ENCODE measurements at regions of chr2 and their contacts with region 1.

Region 1: DNA sequence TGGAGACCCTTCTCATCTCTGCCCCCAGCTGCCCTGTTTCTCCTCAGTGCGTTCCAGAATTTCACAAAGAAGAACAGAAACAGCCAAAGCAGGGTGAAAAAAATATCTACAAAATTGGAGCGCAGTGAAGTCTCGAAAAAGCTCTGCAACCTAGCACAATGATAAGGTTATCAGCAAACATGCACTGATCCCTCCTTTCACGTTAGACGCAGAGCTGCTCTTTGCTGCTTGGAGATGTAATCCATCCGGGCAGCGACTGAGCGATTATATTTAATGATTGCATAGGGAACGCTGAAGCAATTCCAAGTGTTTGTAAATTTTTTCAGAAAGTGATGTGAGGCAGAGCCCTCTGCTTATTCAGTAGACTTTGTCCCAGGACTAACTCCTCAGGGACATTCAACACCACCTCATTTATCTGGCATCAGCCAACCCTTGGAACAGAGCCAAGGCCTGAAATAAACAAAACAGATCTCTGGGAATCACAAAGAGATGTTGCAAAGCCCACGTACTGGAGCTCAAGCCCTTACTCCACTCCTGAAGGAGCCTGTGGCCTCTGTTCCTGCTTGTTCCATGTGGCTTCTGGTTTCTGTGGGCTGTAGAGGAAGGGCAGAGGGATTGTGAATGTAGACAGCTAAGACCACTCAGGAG is 172.6 kb upstream of the BCL2L11 start:
- DNase-seq: peak; percentile 32 to 80
- ATAC-seq: peak; percentile 95 to 96
- H3K4me3 ChIP-seq: no peak overlapping the region
- H3K27ac ChIP-seq: peak overlapping the region; percentile 8 to 49 (median 42)
- H3K4me1 ChIP-seq: peaks cover 22 to 23% of the 10 kb centered on the region in 2 donors
- H3K27me3 ChIP-seq: no peaks in the 10 kb centered on the region
- CTCF ChIP-seq: no peak
- POLR2A ChIP-seq: no peak

Region 2: GRCh38 chr2:110204780-110205385 is 743.3 kb before region 1 on chr2 and contains the start of gene NPHP1:
- in situ Hi-C with region 1: no loop called
- intact Hi-C with region 1: no loop called
- DNase-seq: peak; percentile 77 to 91
- ATAC-seq: peak; percentile 80 to 84
- H3K4me3 ChIP-seq: peak within 1 kb of the TSS; percentile 65 to 79 (median 70)
- H3K27ac ChIP-seq: peak within 1 kb of the TSS; percentile 76 to 94 (median 86)
- H3K4me1 ChIP-seq: peaks cover 16 to 40% of the 10 kb centered on the region in 2 donors
- H3K27me3 ChIP-seq: no peaks in the 10 kb centered on the region
- CTCF ChIP-seq: peak in 1 of 5 experiments; percentile 45
- POLR2A ChIP-seq: peak; percentile 84 to 88
- total RNA-seq, gene NPHP1: 3.8 to 10.3 (median 4.6) TPM

Region 3: DNA sequence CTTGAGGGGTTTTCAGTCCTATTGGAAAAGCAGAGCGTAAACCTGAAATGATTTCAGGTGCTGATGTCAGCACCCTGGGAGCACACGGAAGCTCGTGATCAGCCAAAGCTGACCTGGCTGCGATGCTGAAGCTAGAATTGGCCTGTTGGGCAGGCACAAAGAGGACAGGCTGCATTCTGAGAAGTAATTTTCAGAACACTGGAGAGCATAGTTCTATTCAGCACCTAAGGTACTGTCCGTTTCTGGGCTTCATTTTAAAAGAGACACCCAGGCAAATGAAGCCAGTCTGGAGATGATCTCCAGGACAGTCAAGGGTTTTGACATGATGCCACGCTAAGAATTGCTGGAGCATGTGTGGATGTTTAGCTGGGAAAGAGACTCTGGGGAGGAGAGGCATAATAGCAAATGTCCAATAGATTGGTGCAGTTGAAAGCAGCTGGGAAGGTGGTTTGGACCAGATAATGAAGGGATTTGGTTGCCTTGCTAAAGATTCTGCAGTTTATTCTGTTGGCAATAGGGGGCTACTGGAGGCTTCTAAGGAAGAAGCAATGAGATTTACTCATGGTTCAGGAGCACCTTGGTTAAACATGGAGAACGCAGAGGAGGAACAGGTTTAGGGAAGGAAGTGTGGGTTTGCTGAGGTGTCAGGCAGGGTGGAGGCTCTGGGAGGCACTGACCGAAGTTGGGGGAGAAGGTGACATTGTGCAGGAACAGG is 129.2 kb before region 1 on chr2:
- in situ Hi-C with region 1: no loop called
- intact Hi-C with region 1: loop called (anchors 5 kb)
- DNase-seq: no peak
- ATAC-seq: no peak
- H3K4me3 ChIP-seq: no peak overlapping the region
- H3K27ac ChIP-seq: peak overlapping the region in 2 of 4 donors; percentile 55 to 97
- H3K4me1 ChIP-seq: peaks cover 38 to 45% of the 10 kb centered on the region in 2 donors
- H3K27me3 ChIP-seq: no peaks in the 10 kb centered on the region
- CTCF ChIP-seq: no peak
- POLR2A ChIP-seq: no peak

Region 4: DNA sequence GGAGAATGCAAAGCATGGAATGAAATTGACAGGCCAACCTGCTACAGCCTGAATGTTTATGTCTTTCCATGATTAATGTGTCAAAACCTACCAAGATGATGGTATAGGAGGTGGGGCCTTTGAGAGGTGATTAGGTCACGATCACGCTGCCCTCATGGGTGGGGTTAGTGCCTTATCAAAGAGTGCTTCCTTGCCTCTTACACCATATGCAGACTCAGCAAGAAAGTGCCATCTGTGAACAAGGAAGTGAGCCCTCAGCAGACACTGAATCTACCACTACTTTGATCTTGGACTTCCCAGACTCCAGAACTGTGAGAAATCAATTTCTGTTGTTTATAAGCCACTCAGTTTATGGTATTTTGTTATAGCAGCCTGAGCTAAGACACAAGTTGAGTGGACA is 25.1 kb after region 1 on chr2:
- in situ Hi-C with region 1: no loop called
- intact Hi-C with region 1: no loop called
- DNase-seq: no peak
- ATAC-seq: no peak
- H3K4me3 ChIP-seq: no peak overlapping the region
- H3K27ac ChIP-seq: no peak overlapping the region
- H3K4me1 ChIP-seq: no peaks in the 10 kb centered on the region
- H3K27me3 ChIP-seq: no peaks in the 10 kb centered on the region
- CTCF ChIP-seq: no peak
- POLR2A ChIP-seq: no peak

Region 5: GRCh38 chr2:110993557-110994231 is 45.5 kb after region 1 on chr2:
- in situ Hi-C with region 1: no loop called
- intact Hi-C with region 1: loop called (anchors 1 kb)
- DNase-seq: peak; percentile 36 to 63
- ATAC-seq: peak; percentile 96 to 99
- H3K4me3 ChIP-seq: no peak overlapping the region
- H3K27ac ChIP-seq: no peak overlapping the region
- H3K4me1 ChIP-seq: peaks cover 0 to 4% of the 10 kb centered on the region in 2 donors
- H3K27me3 ChIP-seq: no peaks in the 10 kb centered on the region
- CTCF ChIP-seq: no peak
- POLR2A ChIP-seq: no peak

Region 6: DNA sequence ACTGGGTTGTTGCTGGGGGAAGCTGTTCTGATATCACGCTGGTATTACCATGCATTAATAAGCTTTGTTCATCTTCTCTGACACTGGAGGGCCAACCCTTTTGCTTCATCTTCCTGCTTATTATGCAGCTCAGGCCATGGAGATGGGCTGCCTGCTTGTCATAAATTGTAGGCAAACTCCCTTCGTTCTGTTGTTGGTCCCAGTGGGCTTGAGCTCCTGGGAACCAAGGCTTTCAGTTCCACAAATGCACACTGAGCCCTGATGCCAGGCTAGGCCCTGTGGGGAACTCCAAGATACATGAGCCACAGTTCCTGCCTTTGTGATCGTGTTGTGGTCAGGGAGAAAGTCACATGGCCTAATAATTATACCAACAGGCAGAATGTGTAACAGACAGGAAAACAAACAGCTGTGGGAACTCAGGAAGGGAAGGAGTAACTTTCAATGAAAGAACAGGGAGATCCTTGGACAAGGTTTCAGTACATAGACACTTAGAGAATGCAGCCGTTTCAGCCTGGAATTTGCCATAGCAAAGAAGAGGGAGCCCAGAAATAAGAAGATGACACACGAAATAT is 123.5 kb after region 1 on chr2:
- in situ Hi-C with region 1: no loop called
- intact Hi-C with region 1: no loop called
- DNase-seq: no peak
- ATAC-seq: peak; percentile 55 to 76
- H3K4me3 ChIP-seq: no peak overlapping the region
- H3K27ac ChIP-seq: peak overlapping the region in 3 of 4 donors; percentile 3 to 34 (median 33)
- H3K4me1 ChIP-seq: peaks cover 0 to 5% of the 10 kb centered on the region in 2 donors
- H3K27me3 ChIP-seq: no peaks in the 10 kb centered on the region
- CTCF ChIP-seq: no peak
- POLR2A ChIP-seq: no peak

Region 7: GRCh38 chr2:111091811-111092211 is 143.7 kb after region 1 on chr2:
- in situ Hi-C with region 1: no loop called
- intact Hi-C with region 1: no loop called
- DNase-seq: no peak
- ATAC-seq: no peak
- H3K4me3 ChIP-seq: no peak overlapping the region
- H3K27ac ChIP-seq: no peak overlapping the region
- H3K4me1 ChIP-seq: peaks cover 0 to 3% of the 10 kb centered on the region in 2 donors
- H3K27me3 ChIP-seq: no peaks in the 10 kb centered on the region
- CTCF ChIP-seq: no peak
- POLR2A ChIP-seq: no peak

Measured in gastrocnemius medialis (tissue), 4 donors.